ENCODE measurements at regions of chr7 and their contacts with region 1.

Region 1: DNA sequence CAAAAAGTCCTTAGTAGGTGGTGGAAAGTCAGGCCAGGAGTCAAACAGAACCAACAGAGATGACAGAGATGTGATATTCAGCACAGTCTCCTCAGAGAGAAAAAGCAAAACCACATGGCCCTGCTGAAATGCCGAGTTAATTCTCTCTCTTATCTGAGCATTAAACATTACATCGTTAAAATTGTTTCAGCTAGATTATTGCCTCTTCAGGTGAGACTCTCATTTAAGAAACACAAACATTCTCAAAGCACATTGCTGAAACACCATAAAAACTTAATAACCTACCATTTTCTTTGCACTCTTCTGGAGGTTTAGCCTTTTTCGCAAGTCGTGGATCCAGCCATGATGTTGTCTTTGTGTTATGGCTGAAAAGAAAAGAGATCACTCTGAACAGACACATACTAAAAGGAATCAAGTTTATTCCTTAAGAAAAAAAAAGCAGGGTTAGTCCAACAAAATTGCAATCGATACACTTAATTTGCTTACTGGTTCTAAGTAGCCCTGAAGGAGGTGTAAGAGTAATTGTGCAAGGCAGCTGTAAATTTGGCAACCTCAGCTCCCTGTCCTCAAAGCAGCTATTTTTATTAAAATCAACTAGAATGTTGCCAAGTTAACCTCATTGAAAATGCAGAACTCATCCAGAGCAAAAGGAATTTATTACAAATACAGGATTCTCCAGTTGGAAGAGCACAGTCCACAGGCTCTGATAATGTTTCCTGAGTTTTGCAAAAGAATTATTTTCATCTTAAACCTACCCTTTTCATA is 691.1 kb downstream of the PHTF2 start:
- ATAC-seq: peak in 2 of 8 experiments; percentile 18 to 42
- H3K4me3 ChIP-seq: peak overlapping the region in 1 of 5 donors; percentile 14
- H3K27ac ChIP-seq: peak overlapping the region in 1 of 2 donors; percentile 35
- H3K4me1 ChIP-seq: peaks cover 15 to 24% of the 10 kb centered on the region in 2 donors

Region 2: DNA sequence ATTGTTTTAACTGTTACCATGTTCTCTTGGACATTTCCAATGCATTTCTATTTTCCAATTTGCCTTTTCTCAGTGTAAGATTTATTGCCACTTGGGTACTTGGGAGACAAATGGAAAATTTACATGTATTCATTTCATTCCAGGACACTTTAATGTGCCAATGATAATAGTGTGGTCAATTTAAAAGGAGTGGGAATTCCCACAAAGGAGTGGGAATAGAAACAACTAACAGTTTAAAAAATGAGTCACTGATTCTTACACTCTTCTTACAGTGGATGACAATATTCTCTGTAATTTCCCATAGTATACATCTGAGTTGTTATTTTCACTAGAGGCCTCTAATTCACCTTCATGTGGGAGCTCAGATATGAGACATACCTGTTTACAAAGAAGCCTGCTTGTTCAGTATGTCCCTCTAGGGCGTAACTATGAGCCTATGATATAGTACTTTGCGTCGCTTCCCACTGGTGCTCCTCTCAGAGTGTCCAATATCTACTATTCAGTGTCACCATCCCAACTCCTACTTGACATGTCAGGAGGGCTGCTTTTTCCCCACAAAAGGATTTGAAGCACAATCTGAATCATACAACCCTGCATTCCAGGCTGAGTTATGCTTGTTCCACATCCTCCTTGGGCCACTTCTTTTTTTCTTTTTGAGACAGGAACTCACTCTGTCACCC is 389.8 kb before region 1 on chr7:
- in situ Hi-C with region 1: loop called in 1 of 9 experiments (anchors 25 kb)
- ATAC-seq: peak; percentile 56 to 83 (median 70)
- H3K4me3 ChIP-seq: no peak overlapping the region
- H3K27ac ChIP-seq: peak overlapping the region in 1 of 2 donors; percentile 59
- H3K4me1 ChIP-seq: peaks cover under 1 to 21% of the 10 kb centered on the region in 2 donors

Region 3: GRCh38 chr7:78562191-78562590 is 72.5 kb after region 1 on chr7:
- in situ Hi-C with region 1: no loop called
- ATAC-seq: peak in 5 of 8 experiments; percentile 30 to 63 (median 50)
- H3K4me3 ChIP-seq: no peak overlapping the region
- H3K27ac ChIP-seq: no peak overlapping the region
- H3K4me1 ChIP-seq: peaks cover 33 to 46% of the 10 kb centered on the region in 2 donors